T-cell (primary cell): ENCODE measurements at regions of chr1 and their contacts with region 1.

Region 1: GRCh38 chr1:53365437-53366063 is 37.7 kb upstream of the LRP8 start:
- DNase-seq: peak in 2 of 35 experiments; percentile 6 to 17
- ATAC-seq: no peak
- H3K4me3 ChIP-seq: no peak overlapping the region
- H3K4me3 Mint-ChIP-seq: peak overlapping the region in 1 of 3 donors; percentile 90
- H3K27ac ChIP-seq: no peak overlapping the region
- H3K27ac Mint-ChIP-seq: no peak overlapping the region
- H3K4me1 ChIP-seq: peaks cover 4 to 35% of the 10 kb centered on the region in 2 experiments
- H3K4me1 Mint-ChIP-seq: peaks cover 28 to 39% (median 35%) of the 10 kb centered on the region in 3 donors
- H3K27me3 ChIP-seq: peaks cover 0 to 4% of the 10 kb centered on the region in 2 experiments
- H3K27me3 Mint-ChIP-seq: peaks cover 0 to 3% of the 10 kb centered on the region in 2 donors

Region 2: DNA sequence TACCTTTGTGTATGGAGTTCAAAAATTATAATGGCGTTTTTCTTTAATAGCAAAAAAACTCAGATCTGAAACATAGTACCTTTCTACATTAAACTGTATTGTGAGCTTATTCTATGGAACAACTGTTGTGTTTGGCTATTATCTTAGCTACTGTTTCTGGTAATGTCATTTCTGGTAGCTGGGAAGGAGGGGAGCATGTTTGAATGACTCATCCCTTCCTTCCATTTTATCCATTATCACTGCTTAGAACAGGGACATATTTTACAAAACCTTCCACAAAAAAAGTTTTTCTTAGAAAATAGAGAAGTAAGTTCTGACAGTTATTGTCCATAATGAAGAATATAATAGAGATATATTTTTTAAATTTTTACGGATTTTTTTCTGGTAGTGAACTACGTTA is 1615.3 kb before region 1 on chr1:
- CTCF ChIA-PET with region 1: no interaction called
- POLR2A ChIA-PET with region 1: interaction called in 1 of 2 experiments, 12 read pairs
- DNase-seq: no peak
- ATAC-seq: no peak
- H3K4me3 ChIP-seq: no peak overlapping the region
- H3K4me3 Mint-ChIP-seq: no peak overlapping the region
- H3K27ac ChIP-seq: no peak overlapping the region
- H3K27ac Mint-ChIP-seq: no peak overlapping the region
- H3K4me1 ChIP-seq: no peaks in the 10 kb centered on the region
- H3K4me1 Mint-ChIP-seq: peaks cover under 1 to 5% (median 4%) of the 10 kb centered on the region in 3 donors
- H3K27me3 ChIP-seq: no peaks in the 10 kb centered on the region
- H3K27me3 Mint-ChIP-seq: no peaks in the 10 kb centered on the region